ENCODE measurements at regions of chr14 and their contacts with region 1.

Region 1: GRCh38 chr14:50954811-50955372 is 10.6 kb upstream of the PYGL start:
- ATAC-seq: peak; percentile 27 to 82 (median 72)
- H3K4me3 ChIP-seq: no peak overlapping the region
- H3K27ac ChIP-seq: no peak overlapping the region
- H3K4me1 ChIP-seq: peaks cover 14 to 15% of the 10 kb centered on the region in 2 donors

Region 2: DNA sequence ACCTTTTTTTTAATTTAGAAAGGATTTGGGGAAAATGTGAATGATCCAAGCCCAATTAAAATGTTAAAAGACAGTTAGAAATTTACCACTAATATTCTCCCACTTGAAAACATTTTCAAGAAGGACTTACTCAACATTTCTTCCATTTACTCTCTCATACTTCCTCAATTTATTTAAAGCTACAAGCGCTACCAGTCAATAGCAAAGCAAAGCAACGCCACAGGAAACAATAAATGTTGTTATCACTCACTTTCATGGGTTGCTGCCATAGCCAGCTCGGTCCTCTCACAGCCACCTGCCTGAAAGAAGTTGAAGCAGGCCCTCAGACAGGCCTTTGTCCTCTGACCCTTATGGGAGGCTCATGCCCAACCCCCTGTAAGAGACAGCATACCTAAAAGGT is 717.5 kb before region 1 on chr14:
- in situ Hi-C with region 1: no loop called
- ATAC-seq: no peak
- H3K4me3 ChIP-seq: no peak overlapping the region
- H3K27ac ChIP-seq: no peak overlapping the region
- H3K4me1 ChIP-seq: peaks cover 0 to 1% of the 10 kb centered on the region in 2 donors

Region 3: GRCh38 chr14:50741571-50741970 is 213.3 kb before region 1 on chr14:
- in situ Hi-C with region 1: no loop called
- ATAC-seq: peak in 2 of 8 experiments; percentile 28 to 50
- H3K4me3 ChIP-seq: no peak overlapping the region
- H3K27ac ChIP-seq: no peak overlapping the region
- H3K4me1 ChIP-seq: no peaks in the 10 kb centered on the region

Region 4: DNA sequence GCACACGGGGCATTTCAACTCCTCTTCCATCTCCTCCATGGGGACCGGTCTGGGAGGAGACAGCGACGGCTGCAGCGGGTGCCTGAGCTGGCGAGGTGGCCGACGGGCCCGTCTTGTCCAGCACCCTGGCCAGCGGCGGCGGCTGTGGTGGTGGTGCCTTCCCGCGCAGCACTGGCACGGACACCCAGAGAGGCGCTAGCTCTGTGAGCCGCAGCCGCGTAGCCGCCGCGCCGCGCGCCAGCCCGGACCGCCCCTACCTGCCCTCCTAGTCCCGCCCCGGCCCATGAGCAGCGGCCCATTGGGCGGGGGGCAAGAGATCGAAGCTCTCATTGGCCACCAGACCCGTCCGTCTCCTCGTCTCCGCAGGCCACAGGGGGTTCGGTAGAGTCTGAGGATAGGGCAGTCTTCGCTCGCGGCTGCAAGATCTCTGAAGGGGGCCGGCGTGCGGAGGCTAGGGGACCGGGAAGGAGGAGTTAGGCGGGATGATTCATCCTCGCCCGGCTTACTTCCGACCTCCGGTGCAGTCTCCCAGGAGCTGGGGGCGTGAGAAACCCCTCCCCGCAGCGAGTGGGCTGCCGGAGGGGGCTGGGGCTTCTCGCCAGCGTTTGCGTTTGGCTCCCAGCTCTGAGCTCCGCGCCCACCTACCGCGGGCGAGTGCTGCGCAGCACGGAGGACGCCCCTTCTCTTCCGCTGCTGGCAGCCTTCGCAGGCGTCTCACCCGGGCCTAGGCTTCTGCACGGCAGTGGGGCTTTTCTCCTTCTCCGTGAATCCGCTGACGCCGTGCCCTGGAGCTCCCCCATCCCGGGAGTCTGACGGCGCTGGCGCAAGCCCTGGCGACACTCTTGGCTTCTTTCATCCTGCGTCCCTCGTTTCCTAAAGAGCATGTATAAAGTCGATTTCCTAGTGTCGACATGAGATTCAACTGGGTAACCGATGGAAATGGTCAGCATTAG is 140.3 kb after region 1 on chr14 and contains the start of gene TRIM9:
- in situ Hi-C with region 1: loop called in 1 of 9 experiments (anchors 25 kb)
- ATAC-seq: peak; percentile 90 to 97 (median 92)
- H3K4me3 ChIP-seq: peak within 1 kb of the TSS; percentile 63 to 94 (median 75)
- H3K27ac ChIP-seq: peak within 1 kb of the TSS; percentile 86 to 87
- H3K4me1 ChIP-seq: peaks cover 20% of the 10 kb centered on the region in 2 donors
- total RNA-seq, gene TRIM9: 8.8 to 46.7 (median 18.8) TPM

Region 5: DNA sequence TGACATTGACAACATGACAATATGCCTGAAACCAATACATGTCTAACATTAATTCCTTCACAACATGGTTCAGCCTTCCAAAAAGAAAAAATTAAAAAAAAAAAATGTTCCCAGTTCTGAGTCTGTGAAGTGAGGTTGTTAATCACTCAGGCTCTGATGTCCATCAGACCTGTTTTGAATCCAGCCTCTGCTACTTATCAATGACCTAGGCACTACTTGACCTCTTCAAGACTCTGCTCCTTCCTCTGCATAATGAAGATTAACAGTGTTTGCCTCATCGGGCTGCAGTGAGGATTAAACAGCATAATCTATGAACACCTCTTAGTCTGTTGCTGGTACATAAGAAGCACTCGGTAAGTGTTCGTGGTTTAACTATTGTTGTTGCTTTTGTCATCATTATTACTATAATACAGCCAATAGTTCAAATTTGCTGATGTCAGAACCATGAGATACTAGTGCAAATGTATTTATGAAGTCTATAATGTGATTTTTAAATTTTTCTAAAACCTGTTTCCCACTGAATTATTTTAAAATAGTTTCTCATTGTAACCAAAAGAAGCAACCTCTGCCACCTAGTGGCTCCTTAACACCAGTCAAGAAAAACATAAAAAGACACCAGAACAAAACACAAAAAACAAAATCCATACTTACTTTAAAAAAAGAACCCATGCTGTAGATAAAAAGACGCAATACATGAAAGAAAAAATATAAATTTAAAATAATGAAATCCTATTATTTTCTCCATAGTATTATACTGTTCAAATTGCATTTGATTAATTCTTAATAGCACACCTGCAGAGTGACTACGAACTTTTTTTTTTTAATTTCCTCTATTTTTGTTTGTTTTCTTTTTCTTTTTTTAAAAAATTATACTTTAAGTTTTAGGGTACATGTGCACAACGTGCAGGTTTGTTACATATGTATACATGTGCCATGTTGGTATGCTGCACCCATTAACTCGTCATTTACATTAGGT is 264.9 kb after region 1 on chr14:
- in situ Hi-C with region 1: loop called in 3 of 9 experiments (anchors 25 kb)
- ATAC-seq: no peak
- H3K4me3 ChIP-seq: no peak overlapping the region
- H3K27ac ChIP-seq: no peak overlapping the region
- H3K4me1 ChIP-seq: no peaks in the 10 kb centered on the region

Region 6: GRCh38 chr14:51239813-51240803 is 285.2 kb after region 1 on chr14 and contains the start of gene TMX1:
- in situ Hi-C with region 1: loop called in 3 of 9 experiments (anchors 25 kb)
- ATAC-seq: peak; percentile 90 to 98 (median 95)
- H3K4me3 ChIP-seq: peak within 1 kb of the TSS; percentile 53 to 95 (median 67)
- H3K27ac ChIP-seq: peak within 1 kb of the TSS; percentile 67 to 75
- H3K4me1 ChIP-seq: peaks cover 6 to 26% of the 10 kb centered on the region in 2 donors
- total RNA-seq, gene TMX1: 18.3 to 54.7 (median 33.0) TPM

Region 7: GRCh38 chr14:51490205-51490604 is 535.3 kb after region 1 on chr14:
- in situ Hi-C with region 1: no loop called
- ATAC-seq: peak in 1 of 8 experiments; percentile 54
- H3K4me3 ChIP-seq: no peak overlapping the region
- H3K27ac ChIP-seq: no peak overlapping the region
- H3K4me1 ChIP-seq: no peaks in the 10 kb centered on the region

Measured in motor neuron (in vitro differentiated cells).